ENCODE measurements at regions of chr6 and their contacts with region 1.

Region 1: DNA sequence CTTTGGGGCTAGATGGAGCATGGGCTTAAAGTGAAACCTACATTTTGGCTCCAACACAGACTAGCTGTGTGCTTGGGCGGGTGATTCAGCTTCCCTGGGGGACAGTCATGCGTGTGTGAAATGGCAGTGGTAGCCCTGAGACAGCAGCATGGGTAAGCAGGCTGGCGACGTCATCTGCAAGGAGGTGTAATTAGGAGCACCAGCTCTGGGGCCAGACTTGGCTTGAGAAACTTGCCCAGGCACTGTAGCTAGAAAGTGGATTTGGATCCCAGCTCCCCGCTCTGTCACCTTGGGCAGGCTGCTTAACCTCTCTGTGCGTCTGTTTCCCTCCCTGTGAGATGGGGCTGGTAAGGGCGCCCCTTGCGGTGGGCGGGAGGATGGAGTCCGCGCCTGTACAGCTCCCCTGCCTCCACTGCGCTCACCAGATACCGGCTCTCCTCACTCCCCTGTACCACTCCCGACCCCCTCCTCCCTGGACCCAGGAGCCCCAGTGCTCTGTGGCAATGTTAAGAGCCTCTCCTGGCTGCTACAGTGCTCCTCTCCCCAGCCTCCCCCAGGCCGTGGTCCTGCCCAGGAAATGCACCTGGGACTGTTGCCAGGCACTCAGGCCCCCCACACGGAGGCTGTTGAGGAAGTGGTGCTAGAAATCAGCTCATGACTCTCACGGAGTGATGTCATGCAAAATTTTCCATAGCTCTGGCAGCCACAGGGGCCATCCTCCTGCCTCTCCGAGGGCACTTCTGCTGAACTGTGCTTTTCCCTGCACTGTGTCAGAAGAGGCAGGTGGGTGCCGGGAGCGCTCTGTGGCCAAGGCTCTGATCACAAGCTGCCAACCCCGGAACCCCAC is 44.6 kb downstream of the SYNJ2 start:
- DNase-seq: peak; percentile 67 to 94 (median 82)
- ATAC-seq: peak; percentile 84
- H3K4me3 ChIP-seq: peak overlapping the region; percentile 44
- H3K4me3 Mint-ChIP-seq: peak overlapping the region; percentile 79 to 86 (median 84)
- H3K27ac ChIP-seq: peak overlapping the region; percentile 73
- H3K27ac Mint-ChIP-seq: peak overlapping the region; percentile 88 to 98 (median 97)
- H3K4me1 ChIP-seq: peaks cover 22 to 23% of the 10 kb centered on the region in 2 donors
- H3K4me1 Mint-ChIP-seq: peaks cover 20 to 40% (median 35%) of the 10 kb centered on the region in 7 donors
- H3K27me3 ChIP-seq: no peaks in the 10 kb centered on the region
- H3K27me3 Mint-ChIP-seq: no peaks in the 10 kb centered on the region

Region 2: GRCh38 chr6:157632821-157633220 is 393.5 kb before region 1 on chr6:
- CTCF ChIA-PET with region 1: no interaction called
- POLR2A ChIA-PET with region 1: no interaction called
- intact Hi-C with region 1: no loop called
- DNase-seq: no peak
- ATAC-seq: no peak
- H3K4me3 ChIP-seq: no peak overlapping the region
- H3K4me3 Mint-ChIP-seq: no peak overlapping the region
- H3K27ac ChIP-seq: no peak overlapping the region
- H3K27ac Mint-ChIP-seq: no peak overlapping the region
- H3K4me1 ChIP-seq: no peaks in the 10 kb centered on the region
- H3K4me1 Mint-ChIP-seq: peaks cover 2 to 11% (median 8%) of the 10 kb centered on the region in 7 donors
- H3K27me3 ChIP-seq: no peaks in the 10 kb centered on the region
- H3K27me3 Mint-ChIP-seq: no peaks in the 10 kb centered on the region

Region 3: GRCh38 chr6:157823001-157823527 is 203.2 kb before region 1 on chr6 and contains the start of gene SNX9:
- CTCF ChIA-PET with region 1: no interaction called
- POLR2A ChIA-PET with region 1: no interaction called
- intact Hi-C with region 1: loop called in 1 of 2 experiments (anchors 1 kb)
- DNase-seq: peak in 8 of 9 donors; percentile 27 to 74 (median 56)
- ATAC-seq: peak; percentile 77
- H3K4me3 ChIP-seq: peak within 1 kb of the TSS; percentile 60
- H3K4me3 Mint-ChIP-seq: peak within 1 kb of the TSS; percentile 88 to 100 (median 96)
- H3K27ac ChIP-seq: peak within 1 kb of the TSS; percentile 96
- H3K27ac Mint-ChIP-seq: peak within 1 kb of the TSS; percentile 95 to 100 (median 99)
- H3K4me1 ChIP-seq: peaks cover 9 to 16% of the 10 kb centered on the region in 2 donors
- H3K4me1 Mint-ChIP-seq: peaks cover 15 to 70% (median 57%) of the 10 kb centered on the region in 7 donors
- H3K27me3 ChIP-seq: no peaks in the 10 kb centered on the region
- H3K27me3 Mint-ChIP-seq: peaks cover 0 to 42% (median 0%) of the 10 kb centered on the region in 5 donors
- total RNA-seq, gene SNX9: 13.4 to 39.2 (median 36.4) TPM

Region 4: GRCh38 chr6:157981395-157982296 is 44.6 kb before region 1 on chr6 and contains the start of gene SYNJ2:
- CTCF ChIA-PET with region 1: interaction called, 19 read pairs
- POLR2A ChIA-PET with region 1: interaction called, 20 read pairs
- intact Hi-C with region 1: loop called (anchors 1 kb)
- DNase-seq: peak; percentile 73 to 89 (median 87)
- ATAC-seq: peak; percentile 96
- H3K4me3 ChIP-seq: peak within 1 kb of the TSS; percentile 81
- H3K4me3 Mint-ChIP-seq: peak within 1 kb of the TSS; percentile 75 to 94 (median 84)
- H3K27ac ChIP-seq: peak within 1 kb of the TSS; percentile 83
- H3K27ac Mint-ChIP-seq: peak within 1 kb of the TSS; percentile 78 to 95 (median 88)
- H3K4me1 ChIP-seq: peaks cover 27 to 38% of the 10 kb centered on the region in 2 donors
- H3K4me1 Mint-ChIP-seq: peaks cover 26 to 65% (median 55%) of the 10 kb centered on the region in 7 donors
- H3K27me3 ChIP-seq: no peaks in the 10 kb centered on the region
- H3K27me3 Mint-ChIP-seq: no peaks in the 10 kb centered on the region
- total RNA-seq, gene SYNJ2: 22.4 to 36.6 (median 22.5) TPM

Region 5: GRCh38 chr6:158014505-158015187 is 11.6 kb before region 1 on chr6:
- CTCF ChIA-PET with region 1: interaction called, 21 read pairs
- POLR2A ChIA-PET with region 1: interaction called, 12 read pairs
- intact Hi-C with region 1: loop called in 1 of 2 experiments (anchors 1 kb)
- DNase-seq: no peak
- ATAC-seq: no peak
- H3K4me3 ChIP-seq: no peak overlapping the region
- H3K4me3 Mint-ChIP-seq: peak overlapping the region in 7 of 10 donors; percentile 2 to 47 (median 11)
- H3K27ac ChIP-seq: no peak overlapping the region
- H3K27ac Mint-ChIP-seq: peak overlapping the region; percentile 2 to 82 (median 68)
- H3K4me1 ChIP-seq: peaks cover 5 to 36% of the 10 kb centered on the region in 2 donors
- H3K4me1 Mint-ChIP-seq: peaks cover 42 to 61% (median 55%) of the 10 kb centered on the region in 7 donors
- H3K27me3 ChIP-seq: no peaks in the 10 kb centered on the region
- H3K27me3 Mint-ChIP-seq: no peaks in the 10 kb centered on the region

Region 6: GRCh38 chr6:158072083-158072721 is 45.9 kb after region 1 on chr6:
- CTCF ChIA-PET with region 1: interaction called, 37 read pairs
- POLR2A ChIA-PET with region 1: interaction called, 5 read pairs
- intact Hi-C with region 1: loop called (anchors 1 kb)
- DNase-seq: peak; percentile 28 to 69 (median 65)
- ATAC-seq: peak; percentile 85
- H3K4me3 ChIP-seq: no peak overlapping the region
- H3K4me3 Mint-ChIP-seq: no peak overlapping the region
- H3K27ac ChIP-seq: no peak overlapping the region
- H3K27ac Mint-ChIP-seq: peak overlapping the region; percentile 32 to 91 (median 55)
- H3K4me1 ChIP-seq: peaks cover 0 to 5% of the 10 kb centered on the region in 2 donors
- H3K4me1 Mint-ChIP-seq: peaks cover 5 to 31% (median 6%) of the 10 kb centered on the region in 7 donors
- H3K27me3 ChIP-seq: no peaks in the 10 kb centered on the region
- H3K27me3 Mint-ChIP-seq: no peaks in the 10 kb centered on the region

Measured in naive thymus-derived CD4-positive, alpha-beta T cell (primary cell).